ENCODE measurements at regions of chr12 and their contacts with region 1.

Region 1: DNA sequence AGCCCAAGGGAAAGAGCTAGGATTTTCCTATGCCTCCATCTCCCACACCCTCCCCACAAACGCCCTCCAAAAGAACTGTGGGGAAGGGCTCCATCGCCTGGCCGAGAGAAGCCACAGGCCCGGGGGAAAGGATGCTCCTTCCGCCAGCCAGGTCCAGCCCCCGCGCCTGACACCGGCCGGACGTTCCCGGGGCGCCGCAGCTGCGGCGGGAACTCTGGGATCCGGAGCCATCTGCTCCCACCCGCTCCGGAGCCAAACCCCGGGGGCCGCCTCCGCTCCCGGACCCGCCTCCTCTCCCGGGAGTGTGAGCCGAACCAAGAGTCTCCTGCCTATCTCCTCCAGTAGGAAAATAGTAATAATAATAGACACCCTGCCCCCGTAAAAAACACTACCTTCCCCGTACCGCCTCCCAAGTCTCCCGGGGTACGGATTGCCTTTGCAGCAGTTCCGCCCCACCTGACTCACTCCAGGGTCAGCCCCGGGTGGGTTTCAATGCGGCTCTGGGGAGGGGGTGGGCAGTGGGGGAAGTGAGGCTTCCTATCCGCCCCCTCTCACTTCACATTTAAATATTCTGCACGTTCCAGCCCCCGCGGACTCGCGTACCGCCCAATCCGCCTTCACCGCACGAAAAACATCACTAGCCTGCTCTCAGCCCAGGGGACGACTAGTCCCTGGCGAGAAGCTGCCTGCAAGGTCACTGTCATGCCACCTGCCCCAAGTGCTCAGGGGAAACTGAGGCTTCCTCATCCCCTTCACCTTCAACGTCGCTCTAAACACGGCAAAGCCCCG is 2.4 kb downstream of the AGAP2 start:
- DNase-seq: no peak
- ATAC-seq: peak; percentile 82
- H3K4me3 ChIP-seq: peak overlapping the region; percentile 31 to 54
- H3K27ac ChIP-seq: no peak overlapping the region
- H3K4me1 ChIP-seq: peaks cover 7% of the 10 kb centered on the region; the same call in 1 of the 2 replicates
- H3K27me3 ChIP-seq: no peaks in the 10 kb centered on the region; the same call in 1 of the 2 replicates
- CTCF ChIP-seq: peak; percentile 80

Region 2: DNA sequence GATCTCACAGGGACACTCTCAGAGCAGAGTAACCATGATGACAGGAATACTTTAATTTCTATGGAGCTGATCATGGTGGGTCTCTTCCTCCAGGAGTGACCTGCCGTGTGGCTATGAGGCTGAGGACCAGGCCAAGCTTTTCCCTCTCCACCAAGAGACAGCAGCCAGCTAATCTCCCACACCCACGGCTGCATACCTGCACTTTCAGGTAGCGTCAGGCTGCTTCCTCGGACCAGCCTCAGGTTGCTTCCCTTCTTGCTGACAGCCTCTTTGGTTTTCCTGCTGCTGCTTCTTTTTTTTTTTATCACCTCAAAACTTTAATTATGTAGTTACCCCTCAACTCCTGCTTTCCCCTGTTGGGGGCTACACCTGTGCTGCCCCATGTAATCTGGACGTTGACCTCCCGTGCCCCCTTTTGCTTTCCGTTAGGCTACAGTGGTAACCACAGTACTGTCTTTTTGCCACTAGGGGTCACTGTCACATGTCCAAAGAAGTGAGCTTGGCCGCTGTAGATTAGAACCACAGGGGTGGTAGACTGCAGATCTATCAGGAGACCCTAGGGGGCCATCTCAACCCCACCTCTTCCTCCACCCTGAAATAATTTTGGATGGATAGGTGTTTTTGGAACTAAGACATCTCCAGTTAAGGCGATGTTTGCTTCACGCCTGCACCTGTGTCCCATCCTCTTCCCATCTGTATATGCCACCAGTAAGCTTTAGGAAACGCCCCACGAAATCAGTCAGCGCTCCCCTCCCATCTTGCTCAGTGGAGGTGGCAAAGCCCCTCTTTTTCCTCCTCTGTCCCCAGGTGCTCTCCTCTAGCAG is 152.9 kb before region 1 on chr12:
- CTCF ChIA-PET with region 1: interaction called, 9 read pairs
- POLR2A ChIA-PET with region 1: no interaction called
- in situ Hi-C with region 1: no loop called
- intact Hi-C with region 1: loop called (anchors 5 kb)
- DNase-seq: peak; percentile 53
- ATAC-seq: peak; percentile 97
- H3K4me3 ChIP-seq: no peak overlapping the region
- H3K27ac ChIP-seq: no peak overlapping the region
- H3K4me1 ChIP-seq: no peaks in the 10 kb centered on the region
- H3K27me3 ChIP-seq: no peaks in the 10 kb centered on the region
- CTCF ChIP-seq: peak; percentile 95